SK-N-SH (cell line): ENCODE measurements at regions of chr1 and their contacts with region 1.

Region 1: GRCh38 chr1:165073185-165074007 is 283.1 kb downstream of the LMX1A start:
- DNase-seq: peak; percentile 47
- H3K4me3 ChIP-seq: no peak overlapping the region; a peak in 1 of 4 replicates
- H3K27ac ChIP-seq: no peak overlapping the region
- H3K4me1 ChIP-seq: no peaks in the 10 kb centered on the region
- H3K27me3 ChIP-seq: no peaks in the 10 kb centered on the region
- CTCF ChIP-seq: peak; percentile 76
- EP300 ChIP-seq: no peak
- RAD21 ChIP-seq: peak; percentile 92

Region 2: GRCh38 chr1:163361123-163361934 is 1712.1 kb before region 1 on chr1:
- CTCF ChIA-PET with region 1: interaction called, 16 read pairs
- POLR2A ChIA-PET with region 1: no interaction called
- DNase-seq: peak; percentile 27
- H3K4me3 ChIP-seq: no peak overlapping the region
- H3K27ac ChIP-seq: no peak overlapping the region
- H3K4me1 ChIP-seq: no peaks in the 10 kb centered on the region
- H3K27me3 ChIP-seq: no peaks in the 10 kb centered on the region
- CTCF ChIP-seq: peak; percentile 58
- EP300 ChIP-seq: no peak
- RAD21 ChIP-seq: peak; percentile 86

Region 3: DNA sequence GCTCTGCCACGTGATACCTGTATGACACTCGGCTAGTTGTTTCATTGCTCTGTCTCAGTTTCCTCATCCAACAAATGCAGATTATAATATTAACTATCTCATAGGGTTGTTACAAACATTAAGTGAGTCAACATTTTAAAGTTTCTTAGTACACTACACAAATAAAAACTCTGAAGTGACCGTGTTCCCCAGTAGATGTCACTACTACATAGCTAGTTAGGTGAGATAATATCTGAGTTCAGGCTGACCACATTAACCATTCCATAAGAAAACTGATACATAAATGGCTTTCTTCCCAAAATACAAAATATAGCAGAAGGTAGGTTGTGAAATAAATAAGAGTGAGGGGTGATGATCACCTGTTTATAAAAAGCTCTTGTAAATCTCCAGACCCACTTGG is 1537.6 kb before region 1 on chr1:
- CTCF ChIA-PET with region 1: interaction called, 15 read pairs
- POLR2A ChIA-PET with region 1: no interaction called
- DNase-seq: peak; percentile 12
- H3K4me3 ChIP-seq: peak overlapping the region in 1 of 2 experiments; percentile 30; a peak in 1 of 4 replicates
- H3K27ac ChIP-seq: no peak overlapping the region
- H3K4me1 ChIP-seq: peaks cover 0 to 15% of the 10 kb centered on the region in 2 experiments; a peak in 1 of 4 replicates
- H3K27me3 ChIP-seq: no peaks in the 10 kb centered on the region; the same call in 1 of the 2 replicates
- CTCF ChIP-seq: peak; percentile 53
- EP300 ChIP-seq: no peak
- RAD21 ChIP-seq: peak; percentile 62

Region 4: DNA sequence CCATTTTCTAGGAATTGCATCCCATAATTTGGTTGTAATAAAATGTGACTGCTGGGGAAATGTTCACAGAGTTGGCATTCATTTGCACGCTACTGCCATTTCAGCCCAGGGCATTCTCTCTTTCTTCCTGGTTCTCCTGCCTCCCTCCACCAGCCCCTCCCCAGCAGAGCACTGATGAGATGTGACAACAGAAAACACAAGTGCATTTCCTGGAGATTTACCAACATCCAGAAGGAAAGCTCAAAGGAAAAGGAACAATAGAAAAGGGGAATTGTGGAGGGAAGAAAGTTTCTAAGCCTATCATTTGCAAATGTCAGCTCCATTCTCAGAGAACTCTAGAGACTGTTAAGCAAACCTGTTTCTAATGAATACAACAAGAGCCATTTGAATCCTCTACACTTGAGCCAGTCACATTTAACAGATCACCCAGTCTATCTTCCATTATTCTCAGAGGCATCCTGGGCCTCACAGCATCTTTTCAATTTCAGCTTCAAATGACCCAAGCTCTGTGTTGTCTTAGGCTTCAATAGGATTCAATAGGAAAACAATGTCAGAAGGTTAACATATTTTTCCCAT is 910.0 kb before region 1 on chr1:
- CTCF ChIA-PET with region 1: interaction called, 16 read pairs
- POLR2A ChIA-PET with region 1: no interaction called
- DNase-seq: no peak
- H3K4me3 ChIP-seq: no peak overlapping the region
- H3K27ac ChIP-seq: no peak overlapping the region
- H3K4me1 ChIP-seq: no peaks in the 10 kb centered on the region
- H3K27me3 ChIP-seq: no peaks in the 10 kb centered on the region
- CTCF ChIP-seq: no peak
- EP300 ChIP-seq: no peak
- RAD21 ChIP-seq: no peak

Region 5: DNA sequence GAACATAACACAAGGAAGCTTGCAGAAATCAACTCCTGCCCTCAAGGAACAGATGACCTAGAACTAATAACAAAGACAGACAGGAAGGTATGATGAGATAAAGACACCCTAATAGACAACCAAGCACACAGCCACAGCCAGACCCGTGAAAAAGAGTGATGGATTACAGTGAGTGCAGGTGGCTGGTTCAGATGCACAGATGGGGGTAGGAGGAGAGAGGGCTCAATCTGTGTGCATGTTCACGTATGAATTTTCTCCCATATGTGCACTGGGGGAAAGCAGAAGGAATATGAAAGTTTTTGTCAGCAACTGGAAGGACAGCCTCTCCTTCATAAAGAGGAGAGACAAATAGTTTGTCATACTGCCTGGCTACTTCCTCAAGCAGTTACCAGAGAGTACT is 147.3 kb before region 1 on chr1:
- CTCF ChIA-PET with region 1: no interaction called
- POLR2A ChIA-PET with region 1: no interaction called
- DNase-seq: no peak
- H3K4me3 ChIP-seq: no peak overlapping the region
- H3K27ac ChIP-seq: no peak overlapping the region
- H3K4me1 ChIP-seq: peaks cover 0 to 6% of the 10 kb centered on the region in 2 experiments; a peak in 1 of 4 replicates
- H3K27me3 ChIP-seq: no peaks in the 10 kb centered on the region
- CTCF ChIP-seq: no peak
- EP300 ChIP-seq: no peak
- RAD21 ChIP-seq: no peak

Region 6: GRCh38 chr1:165144757-165145397 is 71.5 kb after region 1 on chr1:
- CTCF ChIA-PET with region 1: no interaction called
- POLR2A ChIA-PET with region 1: no interaction called
- DNase-seq: peak; percentile 38
- H3K4me3 ChIP-seq: no peak overlapping the region; a peak in 1 of 4 replicates
- H3K27ac ChIP-seq: no peak overlapping the region
- H3K4me1 ChIP-seq: no peaks in the 10 kb centered on the region
- H3K27me3 ChIP-seq: no peaks in the 10 kb centered on the region
- CTCF ChIP-seq: peak; percentile 82
- EP300 ChIP-seq: no peak
- RAD21 ChIP-seq: peak; percentile 62